Activated T-helper 1 cell treated with anti-CD3 and anti-CD28 coated beads, Interleukin-12 subunit alpha, Interleukin-12 subunit beta, Interleukin-2, Interleukin-4 antibody, amounts not matched to agents 30 ng/mL and 10 ng/mL and 1 ng/mL, durations not matched to agents 14 hours and 24 hours and 36 hours (primary cell): ENCODE measurements at regions of chr2 and their contacts with region 1.

Region 1: GRCh38 chr2:97966518-97967215 is 29.1 kb downstream of the TMEM131 start:
- DNase-seq: no peak
- H3K4me3 Mint-ChIP-seq: no peak overlapping the region
- H3K27ac Mint-ChIP-seq: peak overlapping the region; percentile 46
- H3K4me1 Mint-ChIP-seq: peaks cover 52% of the 10 kb centered on the region
- H3K27me3 Mint-ChIP-seq: no peaks in the 10 kb centered on the region

Region 2: GRCh38 chr2:97911206-97911921 is 55.3 kb before region 1 on chr2:
- intact Hi-C with region 1: loop called (anchors 2 kb)
- DNase-seq: no peak
- H3K4me3 Mint-ChIP-seq: no peak overlapping the region
- H3K27ac Mint-ChIP-seq: no peak overlapping the region
- H3K4me1 Mint-ChIP-seq: peaks cover 39% of the 10 kb centered on the region
- H3K27me3 Mint-ChIP-seq: no peaks in the 10 kb centered on the region

Region 3: GRCh38 chr2:97979894-97980293 is 13.2 kb after region 1 on chr2:
- intact Hi-C with region 1: loop called (anchors 1 kb)
- DNase-seq: no peak
- H3K4me3 Mint-ChIP-seq: no peak overlapping the region
- H3K27ac Mint-ChIP-seq: no peak overlapping the region
- H3K4me1 Mint-ChIP-seq: peaks cover 13% of the 10 kb centered on the region
- H3K27me3 Mint-ChIP-seq: no peaks in the 10 kb centered on the region